CD8-positive, alpha-beta memory T cell (primary cell): ENCODE measurements at regions of chr1 and their contacts with region 1.

Region 1: GRCh38 chr1:23559136-23559984 is at the start of gene ID3:
- DNase-seq: peak; percentile 80 to 89 (median 89)
- H3K4me3 ChIP-seq: peak within 1 kb of the TSS; percentile 92
- H3K4me3 Mint-ChIP-seq: peak within 1 kb of the TSS; percentile 91 to 96 (median 93)
- H3K27ac ChIP-seq: peak within 1 kb of the TSS; percentile 80
- H3K27ac Mint-ChIP-seq: peak within 1 kb of the TSS; percentile 81 to 95 (median 91)
- H3K4me1 ChIP-seq: peaks cover 50% of the 10 kb centered on the region
- H3K4me1 Mint-ChIP-seq: peaks cover 43 to 63% (median 57%) of the 10 kb centered on the region in 3 donors
- H3K27me3 ChIP-seq: no peaks in the 10 kb centered on the region
- H3K27me3 Mint-ChIP-seq: peaks cover 0 to 8% of the 10 kb centered on the region in 2 donors
- total RNA-seq, gene ID3: 18.4 to 19.3 TPM

Region 2: DNA sequence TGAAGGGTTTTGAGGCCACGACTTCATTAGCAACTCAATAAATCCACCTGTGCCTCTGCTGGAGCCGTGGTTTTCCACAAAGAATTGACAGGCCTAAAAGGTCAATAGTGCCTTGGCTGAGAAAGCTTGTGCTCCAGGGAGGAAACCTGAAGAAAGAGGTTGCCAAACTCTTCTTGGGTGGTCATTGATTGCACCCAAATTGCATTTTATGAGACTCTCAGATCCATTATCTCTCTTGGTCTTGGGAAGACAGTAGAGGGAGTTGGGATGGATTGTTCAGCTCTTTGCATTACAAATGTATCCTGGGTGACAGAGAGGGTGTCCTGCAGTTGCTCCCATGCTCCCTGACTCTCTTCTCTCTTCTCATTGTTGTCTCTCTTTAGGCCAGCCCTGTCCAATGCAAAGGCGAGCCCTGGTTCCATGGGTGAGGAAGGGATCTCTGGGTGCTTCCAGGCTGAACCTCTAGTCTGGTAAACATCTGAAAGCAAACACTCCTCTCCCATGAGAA is 295.9 kb before region 1 on chr1:
- CTCF ChIA-PET with region 1: no interaction called
- POLR2A ChIA-PET with region 1: no interaction called
- DNase-seq: no peak
- H3K4me3 ChIP-seq: no peak overlapping the region
- H3K4me3 Mint-ChIP-seq: no peak overlapping the region
- H3K27ac ChIP-seq: no peak overlapping the region
- H3K27ac Mint-ChIP-seq: no peak overlapping the region
- H3K4me1 ChIP-seq: no peaks in the 10 kb centered on the region
- H3K4me1 Mint-ChIP-seq: no peaks in the 10 kb centered on the region
- H3K27me3 ChIP-seq: no peaks in the 10 kb centered on the region
- H3K27me3 Mint-ChIP-seq: peaks cover 0 to 10% of the 10 kb centered on the region in 2 donors

Region 3: DNA sequence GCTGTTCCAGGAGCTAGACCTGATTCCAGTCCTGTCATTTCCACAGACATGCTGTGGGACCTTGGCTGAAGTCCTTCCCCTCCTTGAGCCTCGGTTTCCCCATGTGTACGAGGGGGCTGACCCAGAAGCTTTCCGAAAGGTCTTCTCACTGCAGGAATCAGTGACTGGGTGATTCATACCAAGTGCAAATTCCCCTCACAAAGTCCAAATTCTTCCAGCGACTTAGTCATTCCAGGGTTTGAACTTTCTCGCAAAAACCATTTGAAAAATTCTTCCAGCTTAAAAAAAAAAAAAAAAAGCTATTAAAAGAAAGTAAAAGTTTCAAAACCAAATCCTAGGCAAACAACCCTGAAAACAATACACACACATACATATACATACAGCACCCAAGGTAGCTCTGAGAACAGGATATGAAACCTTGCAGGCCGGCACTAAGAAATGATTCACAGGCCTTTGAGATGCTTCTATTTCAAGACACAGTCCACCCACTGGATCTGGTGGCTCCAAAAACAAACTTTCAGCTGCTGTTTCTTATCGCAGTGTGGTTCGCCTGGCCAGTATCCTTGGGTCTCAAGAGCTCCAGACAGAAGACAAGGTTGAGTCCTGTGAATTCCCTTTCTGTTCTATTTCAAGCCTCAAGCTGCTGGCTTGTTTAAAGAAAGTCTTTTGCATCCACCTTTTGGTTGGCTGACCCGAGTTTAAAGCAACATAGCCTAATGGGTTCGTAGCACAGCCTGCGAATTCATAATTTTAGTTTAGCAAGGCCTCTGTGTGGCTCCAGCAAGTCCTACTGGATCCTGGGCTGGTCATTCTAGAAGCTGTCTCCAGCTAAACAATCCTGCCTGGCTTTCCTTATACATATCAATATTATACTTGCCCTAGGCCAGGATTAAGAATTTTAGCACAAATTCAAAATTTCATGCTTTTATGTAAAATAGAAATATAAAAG is 18.0 kb after region 1 on chr1:
- CTCF ChIA-PET with region 1: interaction called, 13 read pairs
- POLR2A ChIA-PET with region 1: interaction called, 11 read pairs
- DNase-seq: no peak
- H3K4me3 ChIP-seq: no peak overlapping the region
- H3K4me3 Mint-ChIP-seq: peak overlapping the region in 2 of 7 donors; percentile 44 to 54
- H3K27ac ChIP-seq: no peak overlapping the region
- H3K27ac Mint-ChIP-seq: peak overlapping the region in 6 of 8 donors; percentile 17 to 86 (median 39)
- H3K4me1 ChIP-seq: peaks cover 27% of the 10 kb centered on the region
- H3K4me1 Mint-ChIP-seq: peaks cover 21 to 35% (median 26%) of the 10 kb centered on the region in 3 donors
- H3K27me3 ChIP-seq: no peaks in the 10 kb centered on the region
- H3K27me3 Mint-ChIP-seq: no peaks in the 10 kb centered on the region

Region 4: DNA sequence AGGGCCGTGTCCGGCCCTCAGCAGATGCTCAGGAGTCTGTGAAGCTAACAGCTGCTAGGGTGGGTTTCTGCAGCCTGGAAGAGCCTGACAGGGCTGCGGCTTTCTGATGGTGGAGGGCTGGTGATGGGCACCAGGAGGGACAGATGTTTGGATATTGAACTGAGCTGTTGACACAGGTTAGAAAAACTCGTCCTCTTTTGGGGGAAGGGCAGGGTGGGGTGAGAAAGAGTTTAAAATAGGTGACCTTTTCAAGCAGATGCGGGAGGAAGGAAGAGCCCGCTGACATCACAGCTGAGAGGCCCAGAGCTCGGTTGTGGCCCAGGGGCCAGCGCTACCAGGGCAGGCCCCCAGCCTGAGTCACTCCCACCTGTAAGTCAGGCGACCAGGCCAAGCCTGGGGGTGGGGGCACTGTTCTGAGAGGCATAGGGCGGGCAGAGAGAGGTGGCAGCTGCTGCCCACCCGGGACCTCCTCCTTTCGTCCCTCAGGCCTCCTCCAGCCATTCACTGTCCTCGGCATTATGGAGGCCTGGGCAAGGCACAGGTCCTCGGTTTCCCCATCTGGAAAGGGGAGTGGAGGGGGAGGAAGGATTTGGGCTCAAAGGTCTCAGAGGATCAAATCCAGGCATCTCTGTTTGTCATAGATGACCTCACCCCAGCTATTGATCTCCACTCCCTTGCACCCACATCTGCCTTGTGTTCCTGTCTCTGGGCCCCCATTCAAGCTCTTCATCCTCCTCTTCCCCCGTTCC is 32.3 kb after region 1 on chr1:
- CTCF ChIA-PET with region 1: interaction called, 15 read pairs
- POLR2A ChIA-PET with region 1: interaction called, 14 read pairs
- DNase-seq: peak in 1 of 5 donors; percentile 74
- H3K4me3 ChIP-seq: no peak overlapping the region
- H3K4me3 Mint-ChIP-seq: peak overlapping the region in 6 of 7 donors; percentile 57 to 86 (median 64)
- H3K27ac ChIP-seq: no peak overlapping the region
- H3K27ac Mint-ChIP-seq: peak overlapping the region; percentile 76 to 97 (median 91)
- H3K4me1 ChIP-seq: peaks cover 63% of the 10 kb centered on the region
- H3K4me1 Mint-ChIP-seq: peaks cover 54 to 66% (median 62%) of the 10 kb centered on the region in 3 donors
- H3K27me3 ChIP-seq: no peaks in the 10 kb centered on the region
- H3K27me3 Mint-ChIP-seq: no peaks in the 10 kb centered on the region

Region 5: GRCh38 chr1:23598424-23598823 is 39.1 kb after region 1 on chr1:
- CTCF ChIA-PET with region 1: interaction called, 15 read pairs
- POLR2A ChIA-PET with region 1: interaction called, 19 read pairs
- DNase-seq: no peak
- H3K4me3 ChIP-seq: no peak overlapping the region
- H3K4me3 Mint-ChIP-seq: no peak overlapping the region
- H3K27ac ChIP-seq: no peak overlapping the region
- H3K27ac Mint-ChIP-seq: peak overlapping the region in 1 of 8 donors; percentile 22
- H3K4me1 ChIP-seq: peaks cover 100% of the 10 kb centered on the region
- H3K4me1 Mint-ChIP-seq: peaks cover 80 to 94% (median 86%) of the 10 kb centered on the region in 3 donors
- H3K27me3 ChIP-seq: no peaks in the 10 kb centered on the region
- H3K27me3 Mint-ChIP-seq: no peaks in the 10 kb centered on the region

Region 6: DNA sequence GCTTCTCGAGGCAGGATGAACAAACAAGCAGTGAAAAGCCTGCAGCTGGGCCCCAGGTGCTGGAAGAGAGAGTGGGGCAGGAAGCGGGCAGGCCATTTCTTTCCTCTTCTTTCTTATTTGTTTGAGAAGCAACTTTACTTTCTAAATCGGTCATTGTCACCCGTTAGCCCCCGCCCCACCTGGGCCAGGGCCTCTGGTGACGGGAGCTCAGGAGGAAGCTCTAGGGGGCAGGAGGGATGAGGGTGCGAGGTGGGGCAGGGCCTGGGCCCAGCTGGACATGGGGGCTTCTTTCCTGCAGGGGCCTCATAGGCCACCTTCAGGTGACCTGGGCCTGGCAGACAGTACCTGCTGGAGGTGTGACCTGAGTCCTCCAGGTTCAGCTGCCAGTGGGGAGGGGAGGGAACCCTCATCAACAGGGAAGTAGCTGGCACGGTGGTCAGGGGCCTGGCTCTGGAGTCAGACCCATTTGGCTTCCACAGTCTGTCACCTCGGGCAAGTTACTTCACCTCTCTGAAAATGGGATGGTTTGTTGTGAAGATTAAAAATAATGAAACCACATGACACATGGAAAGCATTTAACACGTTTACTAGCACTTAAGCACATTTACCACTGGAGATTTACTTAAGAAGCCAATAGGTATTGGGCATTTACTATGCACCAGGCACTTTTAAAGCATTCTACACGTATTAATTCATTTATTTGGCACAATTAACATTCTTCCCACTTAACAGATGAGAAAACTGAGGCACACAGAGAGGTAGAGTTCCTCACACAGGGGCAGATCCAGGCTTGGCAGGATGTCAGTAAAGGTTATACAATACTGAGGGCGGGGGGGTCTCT is 54.1 kb after region 1 on chr1:
- CTCF ChIA-PET with region 1: interaction called, 11 read pairs
- POLR2A ChIA-PET with region 1: interaction called, 11 read pairs
- DNase-seq: peak; percentile 21 to 66 (median 44)
- H3K4me3 ChIP-seq: peak overlapping the region; percentile 33
- H3K4me3 Mint-ChIP-seq: peak overlapping the region; percentile 2 to 68 (median 58)
- H3K27ac ChIP-seq: peak overlapping the region; percentile 9
- H3K27ac Mint-ChIP-seq: peak overlapping the region; percentile 73 to 97 (median 92)
- H3K4me1 ChIP-seq: peaks cover 64% of the 10 kb centered on the region
- H3K4me1 Mint-ChIP-seq: peaks cover 57 to 77% (median 73%) of the 10 kb centered on the region in 3 donors
- H3K27me3 ChIP-seq: no peaks in the 10 kb centered on the region
- H3K27me3 Mint-ChIP-seq: peaks cover 0 to 2% of the 10 kb centered on the region in 2 donors

Region 7: DNA sequence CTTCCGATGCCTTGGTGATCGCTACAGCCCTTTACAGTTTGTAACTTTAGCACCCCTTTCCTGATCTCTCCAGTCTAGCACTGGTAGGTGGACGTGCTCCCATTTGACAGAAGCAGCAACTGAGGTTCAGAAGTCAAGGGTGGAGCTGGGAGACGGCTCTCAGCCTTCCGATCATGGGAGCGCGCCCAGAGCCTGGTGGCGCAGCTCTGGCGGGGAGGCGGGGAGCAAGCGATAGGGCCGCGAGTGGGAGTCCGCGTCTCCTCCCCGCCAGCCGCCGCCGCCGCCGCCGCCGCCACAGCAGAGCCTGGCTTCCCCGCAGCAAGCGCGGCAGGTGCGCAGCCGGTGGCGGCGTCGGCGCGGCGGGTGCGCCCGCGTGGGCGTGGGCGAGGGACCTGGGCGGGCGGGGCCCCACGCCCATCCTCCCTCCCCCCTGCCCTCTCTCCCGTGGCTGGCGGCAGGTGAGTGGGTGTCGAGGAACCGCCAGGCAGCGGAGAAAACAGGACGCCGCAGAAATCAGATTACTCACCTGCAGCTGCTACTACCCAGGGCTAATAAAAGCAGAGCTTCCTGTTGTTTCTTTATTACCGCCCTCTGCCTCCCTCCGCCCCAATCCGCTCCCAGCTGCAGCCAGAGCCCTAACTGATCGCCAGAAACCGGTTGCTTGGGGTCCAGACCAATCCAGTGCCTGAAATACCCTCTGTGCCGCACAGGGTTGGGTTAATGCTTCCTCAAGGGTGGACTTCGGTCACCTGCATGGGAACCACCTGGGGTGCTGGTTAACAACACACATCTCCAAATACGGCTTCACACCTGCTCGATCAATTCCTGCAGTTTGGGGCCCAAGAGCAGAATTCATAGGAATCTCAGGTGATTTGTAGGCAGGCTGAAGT is 60.2 kb after region 1 on chr1:
- CTCF ChIA-PET with region 1: interaction called, 25 read pairs
- POLR2A ChIA-PET with region 1: interaction called, 30 read pairs
- DNase-seq: peak; percentile 68 to 92 (median 82)
- H3K4me3 ChIP-seq: peak overlapping the region; percentile 61
- H3K4me3 Mint-ChIP-seq: peak overlapping the region; percentile 79 to 88 (median 83)
- H3K27ac ChIP-seq: peak overlapping the region; percentile 34
- H3K27ac Mint-ChIP-seq: peak overlapping the region; percentile 81 to 97 (median 94)
- H3K4me1 ChIP-seq: peaks cover 83% of the 10 kb centered on the region
- H3K4me1 Mint-ChIP-seq: peaks cover 71 to 88% (median 87%) of the 10 kb centered on the region in 3 donors
- H3K27me3 ChIP-seq: no peaks in the 10 kb centered on the region
- H3K27me3 Mint-ChIP-seq: peaks cover 0 to 2% of the 10 kb centered on the region in 2 donors